ENCODE measurements at regions of chr4 and their contacts with region 1.

Region 1: DNA sequence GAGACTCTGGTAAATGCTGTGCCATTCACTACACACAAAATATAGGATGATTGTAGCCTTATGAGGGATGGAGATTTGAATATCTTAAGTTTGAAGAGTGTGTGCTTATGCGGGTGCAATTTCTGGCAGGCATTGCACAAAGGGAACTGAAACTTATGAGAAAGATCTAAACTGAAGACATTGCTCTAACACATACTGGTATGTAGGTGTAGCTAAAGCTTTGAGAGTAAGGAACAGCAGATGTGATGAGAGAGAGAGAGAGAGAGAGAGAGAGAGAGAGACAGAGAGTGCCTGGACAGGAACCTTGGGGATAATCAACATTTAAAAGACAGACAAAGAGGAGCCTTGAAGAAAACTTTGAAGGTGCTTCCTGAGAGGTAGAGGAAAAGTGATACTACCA is 379.7 kb downstream of the SPRY1 start:
- DNase-seq: no peak
- ATAC-seq: no peak
- H3K4me3 ChIP-seq: no peak overlapping the region
- H3K27ac ChIP-seq: no peak overlapping the region
- H3K4me1 ChIP-seq: no peaks in the 10 kb centered on the region
- H3K27me3 ChIP-seq: no peaks in the 10 kb centered on the region
- CTCF ChIP-seq: no peak

Region 2: GRCh38 chr4:123856689-123857545 is 80.7 kb after region 1 on chr4:
- CTCF ChIA-PET with region 1: no interaction called
- POLR2A ChIA-PET with region 1: no interaction called
- intact Hi-C with region 1: no loop called
- DNase-seq: peak; percentile 33
- ATAC-seq: peak; percentile 75
- H3K4me3 ChIP-seq: peak overlapping the region; percentile 52; the same call in 1 of the 2 replicates
- H3K27ac ChIP-seq: no peak overlapping the region
- H3K4me1 ChIP-seq: peaks cover 10% of the 10 kb centered on the region; the same call in 1 of the 2 replicates
- H3K27me3 ChIP-seq: no peaks in the 10 kb centered on the region
- CTCF ChIP-seq: no peak

Region 3: DNA sequence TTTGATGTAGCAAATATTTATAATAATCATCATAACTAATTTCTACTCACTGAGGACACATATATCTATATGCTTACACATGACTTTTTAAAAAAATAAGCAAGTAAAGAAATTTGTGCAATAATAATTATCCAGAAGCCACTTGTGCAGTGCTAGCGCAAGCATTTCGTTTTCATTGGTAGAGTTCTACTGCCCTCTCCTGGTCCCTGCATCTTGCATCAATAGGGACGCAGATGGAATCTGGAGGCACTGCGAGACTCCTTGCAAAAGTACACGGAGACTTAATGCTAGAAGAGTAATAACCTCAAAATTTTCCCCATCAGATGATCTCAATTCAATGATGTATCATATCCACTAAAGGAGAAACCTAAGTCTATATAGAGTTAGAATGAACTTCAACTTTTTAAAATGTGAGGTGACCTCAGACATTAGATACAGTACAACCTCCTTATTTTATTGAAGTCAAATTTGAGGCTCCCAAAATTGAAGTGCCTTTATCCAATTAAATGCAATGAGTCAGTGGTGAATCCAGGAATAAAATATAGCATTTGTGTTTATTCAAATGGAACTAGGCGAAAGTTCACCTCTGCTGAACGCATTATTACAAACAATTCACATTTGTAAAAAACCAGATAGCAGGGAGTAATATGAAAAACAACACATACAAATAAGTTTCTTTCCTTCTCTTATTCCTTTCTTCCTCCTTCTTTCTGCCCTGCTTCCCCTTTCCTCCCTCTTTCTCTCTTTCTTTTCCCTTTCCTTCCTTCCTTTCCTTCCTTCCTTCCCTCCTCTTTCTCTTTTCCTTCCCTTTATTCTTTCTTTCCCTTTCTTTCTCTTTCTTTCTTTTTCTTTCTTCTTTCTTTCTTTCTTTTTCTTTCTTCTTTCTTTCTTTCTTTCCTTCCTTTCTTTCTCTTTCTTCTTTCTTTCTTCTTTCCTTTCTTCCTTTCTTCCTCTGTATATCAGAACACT is 486.2 kb after region 1 on chr4:
- CTCF ChIA-PET with region 1: no interaction called
- POLR2A ChIA-PET with region 1: no interaction called
- intact Hi-C with region 1: loop called (anchors 1 kb)
- DNase-seq: peak; percentile 87
- ATAC-seq: peak; percentile 98
- H3K4me3 ChIP-seq: no peak overlapping the region; the same call in 1 of the 2 replicates
- H3K27ac ChIP-seq: no peak overlapping the region
- H3K4me1 ChIP-seq: peaks cover 8% of the 10 kb centered on the region
- H3K27me3 ChIP-seq: no peaks in the 10 kb centered on the region
- CTCF ChIP-seq: peak; percentile 87

Region 4: DNA sequence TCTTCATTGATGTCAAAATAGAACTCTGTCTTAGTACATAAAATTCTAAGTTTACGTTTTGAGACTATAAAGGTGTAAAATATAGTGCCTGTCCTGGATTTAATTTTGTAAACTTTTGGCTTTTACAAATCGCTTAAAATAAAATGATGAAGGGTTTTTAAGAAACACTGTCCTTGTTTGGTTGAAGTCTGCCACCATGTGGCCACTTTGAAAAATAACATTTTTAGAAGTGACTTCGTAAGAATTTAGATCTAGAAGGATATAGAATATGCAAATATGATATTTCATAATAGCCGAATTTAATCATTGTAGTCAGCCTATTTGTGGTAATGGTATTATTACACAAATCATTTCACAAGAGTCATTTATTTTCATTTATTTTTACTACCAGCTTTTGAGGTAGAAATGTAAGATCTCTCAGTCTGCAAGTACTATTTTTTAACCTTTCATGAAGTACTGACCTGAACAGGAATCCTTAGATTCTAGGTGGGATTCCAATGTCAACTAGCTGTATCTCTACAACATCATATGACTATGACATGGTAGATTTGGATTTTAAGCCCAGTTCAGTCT is 1507.5 kb after region 1 on chr4:
- CTCF ChIA-PET with region 1: no interaction called
- POLR2A ChIA-PET with region 1: no interaction called
- intact Hi-C with region 1: loop called (anchors 10 kb)
- DNase-seq: peak; percentile 39
- ATAC-seq: no peak
- H3K4me3 ChIP-seq: no peak overlapping the region
- H3K27ac ChIP-seq: no peak overlapping the region
- H3K4me1 ChIP-seq: 0 out of 2 replicates have a peak, but pooled peaks cover 5% of the 10 kb centered on the region
- H3K27me3 ChIP-seq: no peaks in the 10 kb centered on the region
- CTCF ChIP-seq: peak; percentile 73

Measured in PC-3 (cell line).